HEK293 (cell line): ENCODE measurements at regions of chr6 and their contacts with region 1.

Region 1: GRCh38 chr6:73262671-73263569 is at the start of gene KHDC1:
- H3K4me3 ChIP-seq: peak within 1 kb of the TSS; percentile 62
- H3K27ac ChIP-seq: peak within 1 kb of the TSS; percentile 64; the same call in 1 of the 2 replicates
- H3K4me1 ChIP-seq: 0 out of 2 replicates have a peak, but pooled peaks cover 3% of the 10 kb centered on the region
- CTCF ChIP-seq: no peak

Region 2: DNA sequence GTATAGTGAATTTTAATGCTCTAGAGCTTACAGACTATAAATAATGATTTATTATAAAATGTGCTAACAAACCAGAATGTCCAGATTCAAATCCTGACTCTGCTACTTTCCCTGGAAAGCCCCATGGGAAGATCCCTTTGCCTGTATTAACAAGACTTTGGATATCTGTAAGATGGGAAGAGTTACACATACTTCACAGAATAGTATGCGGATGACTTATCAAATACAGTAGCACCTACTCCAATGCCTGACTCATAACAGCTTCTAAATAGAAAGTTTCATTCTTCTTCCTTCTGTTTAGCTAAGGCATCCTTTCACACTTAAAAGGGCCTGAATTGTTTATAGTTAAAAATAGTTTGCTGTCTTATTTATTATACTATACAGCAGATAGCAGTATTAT is 474.7 kb before region 1 on chr6:
- CTCF ChIA-PET with region 1: no interaction called
- POLR2A ChIA-PET with region 1: no interaction called
- H3K4me3 ChIP-seq: no peak overlapping the region
- H3K27ac ChIP-seq: no peak overlapping the region
- H3K4me1 ChIP-seq: no peaks in the 10 kb centered on the region
- CTCF ChIP-seq: no peak

Region 3: GRCh38 chr6:73032586-73032985 is 230.3 kb before region 1 on chr6:
- CTCF ChIA-PET with region 1: no interaction called
- POLR2A ChIA-PET with region 1: no interaction called
- H3K4me3 ChIP-seq: no peak overlapping the region
- H3K27ac ChIP-seq: no peak overlapping the region
- H3K4me1 ChIP-seq: peaks cover 26% of the 10 kb centered on the region
- CTCF ChIP-seq: no peak

Region 4: GRCh38 chr6:73299151-73299971 is 36.4 kb after region 1 on chr6:
- CTCF ChIA-PET with region 1: no interaction called
- POLR2A ChIA-PET with region 1: no interaction called
- H3K4me3 ChIP-seq: no peak overlapping the region
- H3K27ac ChIP-seq: no peak overlapping the region
- H3K4me1 ChIP-seq: no peaks in the 10 kb centered on the region
- CTCF ChIP-seq: no peak

Region 5: GRCh38 chr6:73644941-73645591 is 382.1 kb after region 1 on chr6:
- CTCF ChIA-PET with region 1: no interaction called
- POLR2A ChIA-PET with region 1: interaction called, 10 read pairs
- H3K4me3 ChIP-seq: peak overlapping the region; percentile 42
- H3K27ac ChIP-seq: no peak overlapping the region
- H3K4me1 ChIP-seq: no peaks in the 10 kb centered on the region
- CTCF ChIP-seq: no peak

Region 6: GRCh38 chr6:73710470-73710869 is 447.6 kb after region 1 on chr6:
- CTCF ChIA-PET with region 1: no interaction called
- POLR2A ChIA-PET with region 1: no interaction called
- H3K4me3 ChIP-seq: no peak overlapping the region; the same call in 1 of the 2 replicates
- H3K27ac ChIP-seq: no peak overlapping the region
- H3K4me1 ChIP-seq: peaks cover 14% of the 10 kb centered on the region
- CTCF ChIP-seq: no peak